ENCODE measurements at regions of chr14 and their contacts with region 1.

Region 1: GRCh38 chr14:104694991-104695659 is 5.7 kb downstream of the INF2 start:
- DNase-seq: peak in 13 of 14 experiments; percentile 23 to 82 (median 53)
- ATAC-seq: peak; percentile 77
- H3K4me3 ChIP-seq: peak overlapping the region; percentile 30
- H3K4me3 Mint-ChIP-seq: peak overlapping the region; percentile 74
- H3K27ac ChIP-seq: peak overlapping the region; percentile 57 to 72
- H3K27ac Mint-ChIP-seq: peak overlapping the region; percentile 93
- H3K4me1 ChIP-seq: peaks cover 76% of the 10 kb centered on the region
- H3K4me1 Mint-ChIP-seq: peaks cover 49% of the 10 kb centered on the region
- H3K27me3 ChIP-seq: no peaks in the 10 kb centered on the region
- H3K27me3 Mint-ChIP-seq: no peaks in the 10 kb centered on the region
- CTCF ChIP-seq: no peak

Region 2: DNA sequence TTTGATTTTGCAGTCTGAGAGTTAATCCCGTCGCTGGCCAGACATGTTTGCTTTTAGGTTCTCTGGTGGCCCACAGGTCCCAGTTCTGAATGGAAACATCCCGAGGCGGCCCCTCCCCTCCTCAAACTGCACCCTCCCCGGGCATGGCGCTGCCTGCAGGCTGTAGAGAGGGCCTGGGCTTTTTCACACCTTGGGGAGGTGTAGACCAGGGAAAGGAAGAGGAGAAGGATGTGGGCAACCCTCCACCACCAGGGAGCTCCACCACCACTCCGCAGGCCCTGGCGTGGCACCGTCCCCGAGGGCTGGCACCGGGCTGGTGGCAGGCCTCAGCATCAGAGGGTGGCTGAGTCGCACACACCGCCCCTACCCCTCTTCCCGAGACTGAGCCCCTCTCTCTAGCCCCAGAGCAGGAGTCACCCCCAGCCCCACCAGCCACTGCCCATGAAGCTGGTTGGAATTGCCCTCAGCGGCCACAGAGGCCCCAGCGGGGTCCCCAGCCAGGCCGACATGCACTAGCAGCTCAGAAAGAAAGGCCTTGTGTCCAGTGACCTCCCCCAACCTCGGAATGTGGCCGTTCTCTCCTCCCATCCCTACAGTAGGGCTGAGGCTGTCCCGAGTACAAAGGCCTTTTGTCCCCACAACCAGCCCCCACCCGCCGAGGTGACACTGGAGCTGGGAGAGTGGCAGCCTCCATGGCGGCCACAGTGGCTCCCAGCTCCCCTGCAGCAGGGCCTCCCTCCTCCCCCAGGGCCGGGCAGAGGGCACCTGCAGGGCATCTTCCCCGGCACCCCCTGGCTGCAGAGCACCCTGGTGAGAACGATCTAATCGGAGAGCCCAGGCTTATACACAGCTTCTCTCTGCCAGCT is 29.2 kb before region 1 on chr14:
- CTCF ChIA-PET with region 1: interaction called, 3 read pairs
- POLR2A ChIA-PET with region 1: interaction called, 11 read pairs
- intact Hi-C with region 1: no loop called
- DNase-seq: peak; percentile 28 to 78 (median 50)
- ATAC-seq: peak; percentile 93
- H3K4me3 ChIP-seq: no peak overlapping the region
- H3K4me3 Mint-ChIP-seq: peak overlapping the region; percentile 25
- H3K27ac ChIP-seq: no peak overlapping the region
- H3K27ac Mint-ChIP-seq: peak overlapping the region; percentile 63
- H3K4me1 ChIP-seq: peaks cover 30% of the 10 kb centered on the region
- H3K4me1 Mint-ChIP-seq: peaks cover 32% of the 10 kb centered on the region
- H3K27me3 ChIP-seq: no peaks in the 10 kb centered on the region
- H3K27me3 Mint-ChIP-seq: peaks cover 6% of the 10 kb centered on the region
- CTCF ChIP-seq: peak; percentile 69